ENCODE measurements at regions of chr14 and their contacts with region 1.

Region 1: DNA sequence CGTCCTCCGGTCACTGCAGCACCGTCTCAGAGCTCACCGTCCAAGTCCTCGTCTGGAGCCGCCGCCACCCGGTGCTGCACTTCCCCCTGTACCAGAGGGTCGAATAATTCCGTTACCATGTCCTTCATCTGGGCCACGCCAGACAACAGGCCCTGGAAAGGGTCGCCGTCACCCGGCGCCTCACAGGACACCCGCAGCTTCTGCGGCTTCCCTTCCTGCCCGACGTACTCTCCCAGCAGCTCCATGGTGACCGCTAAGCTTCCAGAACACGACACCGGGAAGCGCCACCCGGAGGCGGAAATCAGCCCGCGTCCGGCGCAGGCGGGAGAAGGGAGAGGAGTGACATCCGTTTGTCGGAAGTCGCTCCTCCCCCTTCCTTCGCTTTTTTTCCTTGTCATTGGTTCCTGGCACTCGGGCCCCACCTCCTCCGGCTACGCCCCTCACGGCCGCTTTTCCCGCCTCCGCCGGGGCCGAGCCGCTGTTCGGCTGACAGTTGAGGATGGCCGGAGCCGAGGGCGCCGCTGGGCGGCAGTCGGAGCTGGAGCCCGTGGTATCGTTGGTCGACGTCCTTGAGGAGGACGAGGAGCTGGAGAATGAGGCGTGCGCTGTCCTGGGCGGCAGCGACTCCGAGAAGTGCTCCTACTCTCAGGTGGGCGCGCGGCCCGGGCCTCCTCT is at the starts of genes GON7 and UBR7:
- DNase-seq: peak; percentile 98
- H3K4me3 Mint-ChIP-seq: peak within 1 kb of the TSS; percentile 74
- H3K27ac Mint-ChIP-seq: peak within 1 kb of the TSS; percentile 97
- H3K4me1 Mint-ChIP-seq: peaks cover 32% of the 10 kb centered on the region
- H3K27me3 Mint-ChIP-seq: no peaks in the 10 kb centered on the region
- total RNA-seq, gene GON7: 16.3 and 17.0 TPM in 2 replicates
- total RNA-seq, gene UBR7: 32.5 and 35.3 TPM in 2 replicates

Region 2: DNA sequence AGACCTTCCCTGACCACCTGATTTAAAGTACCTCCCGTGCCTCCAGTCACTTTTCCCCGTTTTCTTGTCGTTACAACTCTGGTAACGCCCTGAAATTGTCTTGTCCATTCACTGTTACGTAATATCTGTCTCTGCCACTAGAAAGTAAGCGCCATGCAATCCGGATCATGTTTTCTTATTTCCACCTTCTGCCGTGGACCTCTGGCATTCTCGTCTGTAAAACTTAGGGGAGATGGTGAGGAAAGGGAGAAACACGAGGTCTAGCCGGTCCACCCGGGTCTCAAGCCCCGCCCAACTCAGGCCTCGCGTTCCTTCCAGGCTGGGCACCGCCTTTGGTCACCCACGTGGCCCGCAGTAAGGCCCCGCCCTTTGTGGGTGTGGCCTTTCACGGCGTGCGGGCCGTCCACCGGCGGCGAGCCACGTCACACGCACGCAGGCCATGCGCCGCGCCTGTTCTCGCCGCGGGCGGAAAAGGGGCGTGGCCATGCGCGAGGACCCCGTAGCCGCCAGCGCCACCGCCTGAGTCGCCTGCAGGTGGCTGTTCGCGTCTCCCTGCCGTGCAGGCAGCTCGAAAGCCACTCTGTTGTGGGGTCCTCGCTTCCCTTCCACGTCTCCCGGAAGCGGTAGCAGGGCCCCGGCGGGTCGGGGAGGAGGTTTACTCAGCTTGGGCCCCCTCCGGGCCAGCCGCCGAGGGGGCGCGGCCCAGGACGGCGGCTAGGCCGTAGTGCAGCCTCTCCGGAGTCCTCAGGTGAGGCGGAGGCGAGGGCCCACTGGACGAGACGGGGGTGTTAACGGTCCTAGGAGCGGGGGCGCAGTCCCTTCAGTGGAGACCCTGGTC is 413.0 kb before region 1 on chr14 and contains the start of gene GOLGA5:
- intact Hi-C with region 1: loop called (anchors 2 kb)
- DNase-seq: peak; percentile 100
- H3K4me3 Mint-ChIP-seq: peak within 1 kb of the TSS; percentile 98
- H3K27ac Mint-ChIP-seq: peak within 1 kb of the TSS; percentile 92
- H3K4me1 Mint-ChIP-seq: peaks cover 20% of the 10 kb centered on the region
- H3K27me3 Mint-ChIP-seq: peaks cover 6% of the 10 kb centered on the region
- total RNA-seq, gene GOLGA5: 20.1 and 20.8 TPM in 2 replicates

Region 3: DNA sequence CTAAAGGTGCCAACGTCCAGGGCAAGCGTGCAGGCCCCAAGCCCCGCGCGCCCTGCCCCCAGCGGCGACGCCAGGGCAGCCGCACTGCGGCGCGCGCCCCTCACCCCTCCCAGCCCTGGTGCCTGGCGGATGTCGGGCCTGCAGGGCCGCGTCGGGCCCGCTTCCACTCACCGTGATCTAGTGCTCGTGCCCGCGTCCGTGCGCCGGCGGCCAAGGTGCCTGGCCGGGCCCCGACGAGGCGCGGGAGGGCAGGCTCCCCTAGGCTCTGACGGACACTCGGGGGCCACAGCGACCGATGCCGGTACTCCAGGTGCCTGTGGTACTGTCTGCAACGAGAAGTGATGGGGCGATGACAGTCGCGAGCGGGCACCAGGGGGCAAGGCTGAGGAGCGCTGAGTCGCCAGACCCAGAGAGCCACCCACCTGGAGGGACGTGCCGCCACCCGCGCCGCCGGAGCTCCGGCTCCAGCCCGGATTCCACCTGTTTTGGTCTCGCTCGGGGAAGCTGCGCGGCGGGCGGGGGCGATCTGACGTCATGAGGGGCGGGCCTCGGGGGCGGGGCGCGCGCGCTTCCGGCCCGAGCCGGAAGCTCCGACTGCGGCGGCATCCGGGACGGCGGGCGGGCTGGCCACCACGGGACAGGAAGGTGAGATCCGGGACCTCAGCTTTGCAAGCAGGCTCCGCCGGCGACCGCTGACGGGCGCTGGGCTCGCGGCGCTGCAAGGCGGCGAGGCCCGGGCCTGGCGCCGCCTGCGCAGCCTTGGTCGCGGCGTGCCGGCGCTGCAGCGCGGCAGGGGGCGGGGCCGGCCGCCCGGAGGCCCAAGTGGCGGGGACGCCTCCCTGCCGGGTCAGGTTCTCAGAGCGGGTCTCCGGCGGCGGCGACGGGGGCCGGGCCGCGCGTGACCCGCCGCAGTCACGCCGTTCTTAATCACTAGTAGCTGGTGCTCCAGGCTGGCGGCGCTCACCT is 22.3 kb before region 1 on chr14 and contains the starts of genes LYSET and MOAP1:
- intact Hi-C with region 1: loop called (anchors 1 kb)
- DNase-seq: peak; percentile 96
- H3K4me3 Mint-ChIP-seq: peak within 1 kb of the TSS; percentile 95
- H3K27ac Mint-ChIP-seq: peak within 1 kb of the TSS; percentile 90
- H3K4me1 Mint-ChIP-seq: peaks cover 27% of the 10 kb centered on the region
- H3K27me3 Mint-ChIP-seq: no peaks in the 10 kb centered on the region
- total RNA-seq, gene LYSET: 14.7 and 18.6 TPM in 2 replicates
- total RNA-seq, gene MOAP1: 16.2 and 17.1 TPM in 2 replicates

Region 4: GRCh38 chr14:93332853-93333630 is 126.1 kb after region 1 on chr14 and contains the start of gene BTBD7:
- intact Hi-C with region 1: loop called (anchors 2 kb)
- DNase-seq: peak; percentile 98
- H3K4me3 Mint-ChIP-seq: peak within 1 kb of the TSS; percentile 93
- H3K27ac Mint-ChIP-seq: peak within 1 kb of the TSS; percentile 94
- H3K4me1 Mint-ChIP-seq: peaks cover 38% of the 10 kb centered on the region
- H3K27me3 Mint-ChIP-seq: no peaks in the 10 kb centered on the region
- total RNA-seq, gene BTBD7: 15.2 and 19.4 TPM in 2 replicates

Measured in activated CD4-positive, alpha-beta T cell treated with anti-CD3 and anti-CD28 coated beads, Interleukin-2, amount 10 ng/mL, durations not matched to agents 24 days and 14 days (primary cell).